ENCODE measurements at regions of chr19 and their contacts with region 1.

Region 1: DNA sequence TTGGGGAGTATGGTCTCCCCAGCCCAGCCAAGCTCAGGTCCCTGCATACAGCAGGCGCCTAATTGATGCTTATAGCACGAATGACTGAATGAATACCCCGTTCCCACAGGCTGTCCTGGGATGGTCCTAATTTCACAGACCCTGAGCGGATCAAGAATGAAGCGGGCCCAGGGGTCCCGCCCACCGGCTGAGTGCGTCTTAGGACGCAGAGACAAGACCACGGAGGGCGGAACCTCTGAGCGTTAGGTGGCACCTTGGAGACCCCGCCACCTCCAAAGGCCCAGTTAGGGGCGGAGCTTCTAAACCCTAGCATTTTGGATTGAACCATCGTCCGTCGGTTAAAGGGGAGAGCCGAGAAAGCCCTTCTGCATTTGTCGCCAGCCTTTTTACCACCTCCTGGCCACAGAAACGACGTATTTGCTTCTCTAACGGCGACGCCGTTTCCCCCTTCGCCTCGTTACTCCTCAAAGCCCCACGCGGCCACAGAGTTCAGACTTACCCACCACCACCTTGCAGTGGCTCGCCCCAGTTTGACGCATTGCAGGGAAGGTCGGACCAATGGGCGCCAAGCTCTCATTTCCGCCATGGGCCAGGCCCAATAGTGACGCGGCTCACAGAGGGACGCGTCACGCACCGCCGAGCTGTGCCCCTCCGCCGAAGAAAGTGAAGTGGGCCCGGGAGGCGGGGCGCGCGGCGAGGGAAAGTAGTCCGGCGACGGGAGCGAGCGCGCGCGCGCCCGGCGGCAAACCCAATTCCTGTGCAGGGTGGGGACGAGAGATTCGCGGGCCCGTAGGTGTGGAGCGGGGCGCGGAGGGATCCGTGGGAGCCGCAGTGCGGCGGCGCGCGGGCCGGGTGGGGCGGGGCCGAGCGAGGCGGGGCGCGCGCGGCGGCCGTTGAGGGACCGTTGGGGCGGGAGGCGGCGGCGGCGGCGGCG is 479 bp upstream of the CALM3 start:
- DNase-seq: peak; percentile 96
- ATAC-seq: peak; percentile 96 to 97
- H3K4me3 ChIP-seq: peak overlapping the region; percentile 100
- H3K27ac ChIP-seq: peak overlapping the region; percentile 99
- H3K4me1 ChIP-seq: peaks cover 29% of the 10 kb centered on the region
- H3K27me3 ChIP-seq: no peaks in the 10 kb centered on the region
- CTCF ChIP-seq: no peak

Region 2: DNA sequence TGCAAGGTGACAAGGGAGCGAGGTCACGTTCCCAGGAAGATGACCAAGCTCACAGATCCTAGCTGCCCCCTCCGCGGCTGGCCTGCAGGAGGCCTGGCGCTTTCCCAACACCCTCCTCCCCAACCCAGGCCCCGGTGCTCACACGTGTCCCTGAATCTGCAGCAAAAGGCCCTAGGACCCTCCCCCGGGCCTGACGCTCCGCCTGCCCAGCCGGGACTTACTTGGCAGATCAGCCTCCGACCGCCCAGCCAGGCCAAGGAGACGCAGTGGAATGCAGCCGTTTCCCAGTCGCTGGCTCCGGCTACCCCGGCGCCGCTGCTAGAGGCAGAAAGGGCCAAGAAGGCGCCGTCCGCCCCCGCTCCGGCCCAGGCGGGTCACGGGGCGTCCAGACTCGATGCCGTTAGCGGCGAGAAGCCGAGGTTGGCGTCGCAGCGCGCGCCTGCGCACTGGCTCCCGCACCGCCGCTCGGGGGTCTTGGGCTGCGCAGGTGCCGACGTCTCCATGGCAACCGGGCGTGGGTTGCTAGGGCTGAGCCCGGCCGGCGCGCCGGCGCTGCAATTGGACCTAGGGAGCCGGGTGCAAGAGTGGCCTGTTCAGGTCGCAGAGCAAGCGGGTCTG is 129.4 kb before region 1 on chr19 and contains the start of gene PNMA8A:
- intact Hi-C with region 1: no loop called
- DNase-seq: peak; percentile 62
- ATAC-seq: peak; percentile 68 to 73
- H3K4me3 ChIP-seq: peak within 1 kb of the TSS; percentile 37
- H3K27ac ChIP-seq: peak within 1 kb of the TSS; percentile 41
- H3K4me1 ChIP-seq: peaks cover 14% of the 10 kb centered on the region
- H3K27me3 ChIP-seq: peaks cover 27% of the 10 kb centered on the region
- CTCF ChIP-seq: no peak
- total RNA-seq, gene PNMA8A: 1.5 TPM

Region 3: DNA sequence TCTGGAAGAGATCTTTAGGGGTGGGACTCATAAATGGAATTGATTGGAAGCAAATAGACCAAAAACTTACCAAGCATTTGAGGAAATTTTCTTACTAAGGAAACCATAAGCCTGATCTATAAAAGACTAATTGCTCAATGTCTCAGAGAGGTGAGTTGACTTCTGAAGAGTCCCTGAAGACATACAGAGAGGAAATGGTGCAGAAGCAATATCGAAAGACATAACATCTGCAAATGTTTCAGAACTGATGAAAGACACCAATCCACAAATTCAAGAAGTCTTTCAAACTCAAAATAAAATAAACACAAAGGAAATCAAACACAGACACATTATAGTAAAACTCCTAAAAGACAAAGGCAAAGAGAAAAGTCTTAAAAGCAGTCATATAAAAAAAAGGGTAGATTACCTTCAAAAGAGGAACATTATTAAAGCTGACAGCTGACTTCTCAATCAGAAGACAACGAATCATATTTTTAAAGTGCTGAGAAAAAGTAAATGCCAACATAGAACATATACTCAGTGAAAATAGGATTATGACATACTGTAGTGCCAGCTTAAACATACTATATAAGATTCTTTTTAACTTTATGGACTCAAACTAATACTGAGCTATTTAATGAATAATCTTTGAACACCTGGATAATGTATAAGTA is 44.9 kb before region 1 on chr19:
- intact Hi-C with region 1: no loop called
- DNase-seq: no peak
- ATAC-seq: no peak
- H3K4me3 ChIP-seq: no peak overlapping the region
- H3K27ac ChIP-seq: no peak overlapping the region
- H3K4me1 ChIP-seq: no peaks in the 10 kb centered on the region
- H3K27me3 ChIP-seq: no peaks in the 10 kb centered on the region
- CTCF ChIP-seq: no peak

Region 4: DNA sequence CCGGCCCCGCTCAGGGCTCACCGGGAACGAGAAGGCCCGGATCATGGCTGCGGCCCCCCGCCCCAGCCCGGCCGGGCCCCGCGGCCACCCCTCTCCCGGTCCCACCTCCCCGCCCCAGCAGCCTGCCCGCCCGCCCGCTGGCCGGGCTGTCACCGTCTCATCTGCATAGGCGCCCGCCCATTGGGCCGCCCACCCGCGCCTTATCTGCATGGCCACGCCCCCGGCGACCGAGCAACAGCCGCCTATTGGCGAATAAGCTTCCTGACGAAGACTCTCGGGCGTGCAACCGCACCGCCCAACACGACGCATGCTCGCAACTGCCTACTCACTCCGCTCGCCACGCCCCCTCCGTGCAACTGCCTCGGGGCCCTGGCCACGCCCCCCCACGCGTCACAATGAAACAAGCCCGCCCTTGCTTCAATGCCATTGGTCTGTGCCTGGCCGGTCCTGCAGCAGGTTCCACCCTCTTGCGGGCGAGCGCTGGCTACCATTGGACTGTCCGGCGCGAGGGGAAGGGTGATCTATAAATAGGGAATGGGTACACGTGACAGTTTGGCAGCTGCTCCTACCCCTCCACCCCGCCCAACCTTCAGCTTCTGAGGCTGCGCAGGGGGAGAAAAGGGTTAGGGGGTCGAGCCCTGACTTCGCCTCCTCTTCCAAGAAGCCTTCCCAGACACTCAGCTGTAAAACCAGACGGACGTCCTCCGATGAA is 60.5 kb after region 1 on chr19 and contains the start of gene DACT3:
- intact Hi-C with region 1: loop called (anchors 10 kb)
- DNase-seq: peak; percentile 100
- ATAC-seq: peak; percentile 98
- H3K4me3 ChIP-seq: peak within 1 kb of the TSS; percentile 65
- H3K27ac ChIP-seq: peak within 1 kb of the TSS; percentile 55
- H3K4me1 ChIP-seq: peaks cover 26% of the 10 kb centered on the region
- H3K27me3 ChIP-seq: peaks cover 28% of the 10 kb centered on the region
- CTCF ChIP-seq: peak; percentile 10
- total RNA-seq, gene DACT3: 4.9 TPM

Measured in lower lobe of right lung (tissue), 2 donors.